A549 (cell line): ENCODE measurements at regions of chr16 and their contacts with region 1.

Region 1: DNA sequence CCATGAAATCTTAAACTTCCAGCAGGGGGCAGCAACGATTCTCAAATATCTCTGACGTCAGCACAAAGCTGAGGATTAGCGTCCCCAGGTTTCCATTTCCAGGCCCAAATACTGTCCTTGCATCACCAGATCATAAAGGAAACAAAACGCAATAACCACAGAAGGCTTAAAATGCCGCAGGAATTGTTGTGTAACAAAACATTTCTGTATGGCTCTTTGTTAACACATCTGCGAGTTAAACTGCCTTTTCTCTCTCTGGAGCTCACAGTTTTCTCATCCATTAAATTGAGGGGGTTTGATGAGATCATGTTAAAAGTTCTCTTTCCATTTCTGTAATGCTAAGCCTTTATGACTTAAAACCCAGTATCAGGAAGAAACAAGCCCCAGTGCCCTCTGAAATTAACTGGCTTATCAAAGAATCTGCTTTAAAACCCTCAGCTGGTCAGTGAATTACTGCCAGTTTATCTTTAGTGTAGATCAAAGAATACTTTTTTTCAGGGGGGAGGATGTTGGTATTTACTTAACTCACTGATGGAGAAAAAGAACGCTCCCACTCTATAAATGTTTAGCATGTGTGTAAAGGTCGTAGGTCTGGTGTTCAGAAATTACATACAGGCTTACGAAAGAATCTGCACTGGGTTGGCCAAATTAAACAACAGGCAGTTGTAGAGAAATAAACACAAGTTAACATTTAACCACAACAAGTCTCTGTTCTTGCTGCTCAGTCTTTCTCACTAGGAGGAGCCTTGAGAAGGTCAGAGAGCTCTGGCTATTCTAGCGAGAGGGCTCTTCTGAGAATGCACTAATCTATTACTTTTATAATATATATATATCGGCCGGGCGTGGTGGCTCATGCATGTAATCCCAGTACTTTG is 10.6 kb upstream of the TERF2 start:
- DNase-seq: peak; percentile 59 to 97
- ATAC-seq: peak; percentile 80 to 81
- H3K4me3 ChIP-seq: peak overlapping the region; percentile 30; the same call in 2 of the 3 replicates
- H3K27ac ChIP-seq: peak overlapping the region; percentile 90 to 95
- H3K4me1 ChIP-seq: peaks cover 61% of the 10 kb centered on the region
- CTCF ChIP-seq: peak; percentile 83
- EP300 ChIP-seq: peak; percentile 98
- POLR2A ChIP-seq: no peak
- RAD21 ChIP-seq: peak; percentile 81 to 83

Region 2: GRCh38 chr16:69410285-69410990 is 14.0 kb after region 1 on chr16:
- CTCF ChIA-PET with region 1: interaction called, 67 read pairs
- POLR2A ChIA-PET with region 1: interaction called, 3 read pairs
- DNase-seq: peak; percentile 33 to 80
- ATAC-seq: peak; percentile 44 to 48; a peak in 3 of 6 replicates
- H3K4me3 ChIP-seq: no peak overlapping the region
- H3K27ac ChIP-seq: peak overlapping the region; percentile 84 to 87
- H3K4me1 ChIP-seq: peaks cover 60% of the 10 kb centered on the region
- CTCF ChIP-seq: no peak
- EP300 ChIP-seq: peak; percentile 67 to 80; a peak in 3 of 5 replicates
- POLR2A ChIP-seq: no peak
- RAD21 ChIP-seq: no peak; a peak in 1 of 5 replicates

Region 3: DNA sequence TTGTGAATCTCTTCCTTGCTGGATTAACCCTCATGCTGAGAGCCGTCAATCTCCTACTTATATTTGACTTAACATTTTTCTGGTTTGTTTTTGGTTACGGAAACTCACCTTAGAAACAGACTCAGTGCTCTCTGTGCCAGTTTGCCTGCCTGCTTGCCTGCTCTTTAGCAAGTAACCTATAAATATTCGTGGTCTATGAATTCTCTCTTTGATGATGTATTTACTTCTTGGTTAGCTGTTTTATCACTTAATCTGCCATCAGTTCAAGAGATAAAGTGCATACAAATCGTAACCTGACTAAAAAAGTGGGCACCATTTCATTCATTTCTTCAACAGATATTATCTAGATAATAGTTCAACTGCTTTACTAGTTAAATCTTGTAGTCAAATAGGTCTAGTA is 54.7 kb after region 1 on chr16:
- CTCF ChIA-PET with region 1: interaction called, 10 read pairs
- POLR2A ChIA-PET with region 1: no interaction called
- DNase-seq: peak in 1 of 2 experiments; percentile 17
- ATAC-seq: no peak
- H3K4me3 ChIP-seq: no peak overlapping the region
- H3K27ac ChIP-seq: no peak overlapping the region
- H3K4me1 ChIP-seq: peaks cover 33% of the 10 kb centered on the region
- CTCF ChIP-seq: no peak
- EP300 ChIP-seq: no peak
- POLR2A ChIP-seq: no peak
- RAD21 ChIP-seq: no peak

Region 4: DNA sequence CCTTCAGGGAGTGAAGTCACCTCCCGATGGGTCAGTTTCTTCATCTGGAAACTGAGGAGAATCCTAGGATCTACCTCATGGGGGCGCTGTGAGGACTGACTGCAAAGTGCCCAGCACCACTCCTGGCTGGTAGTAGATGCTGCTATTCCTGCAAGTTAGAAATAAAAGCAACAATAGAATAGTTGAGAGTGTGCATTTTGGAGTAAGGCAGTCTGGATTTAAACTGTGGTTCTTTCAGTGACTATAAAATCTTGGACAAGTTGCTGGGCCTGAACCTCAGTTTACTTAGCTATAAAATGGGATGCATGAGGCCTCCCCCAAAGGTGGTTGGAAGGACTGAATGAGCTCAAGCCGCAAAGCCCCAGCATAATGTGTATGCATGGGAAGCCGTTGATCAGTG is 98.6 kb after region 1 on chr16:
- CTCF ChIA-PET with region 1: interaction called, 11 read pairs
- POLR2A ChIA-PET with region 1: no interaction called
- DNase-seq: peak in 1 of 2 experiments; percentile 45
- ATAC-seq: peak in 1 of 2 experiments; percentile 58; a peak in 3 of 6 replicates
- H3K4me3 ChIP-seq: no peak overlapping the region
- H3K27ac ChIP-seq: no peak overlapping the region
- H3K4me1 ChIP-seq: no peaks in the 10 kb centered on the region
- CTCF ChIP-seq: peak; percentile 28; the same call in 2 of the 3 replicates
- EP300 ChIP-seq: no peak
- POLR2A ChIP-seq: no peak
- RAD21 ChIP-seq: peak in 1 of 2 experiments; percentile 28; a peak in 3 of 5 replicates

Region 5: GRCh38 chr16:69565671-69566239 is 169.3 kb after region 1 on chr16 and contains the start of gene NFAT5:
- CTCF ChIA-PET with region 1: interaction called, 17 read pairs
- POLR2A ChIA-PET with region 1: interaction called, 8 read pairs
- DNase-seq: peak; percentile 72 to 87
- ATAC-seq: peak; percentile 77 to 82
- H3K4me3 ChIP-seq: peak within 1 kb of the TSS; percentile 79
- H3K27ac ChIP-seq: peak within 1 kb of the TSS; percentile 97 to 99
- H3K4me1 ChIP-seq: peaks cover 50% of the 10 kb centered on the region
- CTCF ChIP-seq: no peak
- EP300 ChIP-seq: no peak
- POLR2A ChIP-seq: peak; percentile 60
- RAD21 ChIP-seq: peak; percentile 8 to 58; a peak in 4 of 5 replicates
- polyA plus RNA-seq, gene NFAT5: 45.1 and 48.3 TPM in 2 replicates

Region 6: DNA sequence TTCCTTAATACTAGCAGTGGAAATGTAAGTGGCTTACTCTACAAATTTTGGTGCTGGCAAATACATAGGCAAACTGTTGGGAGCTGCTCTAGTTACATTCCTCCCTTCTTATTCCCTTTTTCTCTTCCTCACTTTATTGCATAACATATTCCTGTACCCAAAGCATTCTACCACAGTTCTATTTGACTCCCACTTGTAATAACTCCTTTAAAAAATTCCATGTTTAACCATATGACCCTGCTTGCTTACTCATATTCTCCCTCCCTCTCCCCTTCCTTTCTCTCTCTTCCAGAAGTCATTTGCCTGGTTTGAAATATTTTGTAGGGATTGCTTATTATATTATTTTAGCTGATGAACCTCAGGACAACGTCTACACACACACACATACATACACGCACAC is 307.2 kb after region 1 on chr16:
- CTCF ChIA-PET with region 1: interaction called, 36 read pairs
- POLR2A ChIA-PET with region 1: interaction called, 3 read pairs
- DNase-seq: no peak
- ATAC-seq: peak; percentile 9 to 11; a peak in 4 of 6 replicates
- H3K4me3 ChIP-seq: no peak overlapping the region
- H3K27ac ChIP-seq: no peak overlapping the region
- H3K4me1 ChIP-seq: peaks cover 41% of the 10 kb centered on the region
- CTCF ChIP-seq: no peak
- EP300 ChIP-seq: no peak
- POLR2A ChIP-seq: no peak
- RAD21 ChIP-seq: no peak

Region 7: DNA sequence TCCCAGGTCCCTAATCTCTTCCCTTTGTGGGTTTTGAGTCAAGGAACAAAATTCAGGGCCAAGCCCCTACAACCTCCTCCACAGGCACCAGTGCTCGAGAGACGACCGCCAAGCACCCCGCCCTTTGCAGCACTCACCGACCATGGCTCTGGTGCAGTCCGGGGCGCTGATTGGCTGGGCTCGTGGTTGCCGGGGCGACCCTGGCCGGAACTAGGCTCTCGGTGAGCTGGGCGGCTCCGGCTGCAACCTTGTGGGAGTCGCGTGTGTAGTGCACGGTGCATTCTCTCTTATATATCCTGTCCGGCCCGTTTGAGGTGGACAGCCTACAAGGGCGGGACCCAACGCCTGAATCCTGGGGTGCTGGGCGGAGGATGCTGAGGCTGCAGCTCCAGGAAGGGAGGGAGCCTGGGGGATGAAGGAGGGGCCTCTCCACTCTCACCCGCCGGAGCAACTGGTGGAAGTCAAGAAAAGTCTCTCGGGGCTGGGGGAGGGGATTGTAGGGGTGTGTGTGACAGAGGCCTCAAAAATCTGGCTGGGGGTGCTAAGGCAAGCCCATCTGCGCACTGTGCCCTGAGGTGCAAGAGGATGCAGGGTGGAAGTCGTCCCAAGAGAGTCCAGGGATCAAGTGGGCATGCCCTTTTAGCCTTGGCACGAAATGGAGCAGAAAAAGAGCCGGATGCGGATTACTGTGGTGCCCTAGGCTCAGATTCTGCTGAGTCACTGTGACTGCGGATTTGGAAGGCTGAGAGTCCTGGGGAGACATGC is 330.1 kb after region 1 on chr16 and contains the start of gene NQO1:
- CTCF ChIA-PET with region 1: interaction called, 16 read pairs
- POLR2A ChIA-PET with region 1: interaction called, 12 read pairs
- DNase-seq: peak; percentile 95 to 100
- ATAC-seq: peak; percentile 91 to 93
- H3K4me3 ChIP-seq: peak within 1 kb of the TSS; percentile 77
- H3K27ac ChIP-seq: peak within 1 kb of the TSS; percentile 95 to 99
- H3K4me1 ChIP-seq: peaks cover 31% of the 10 kb centered on the region
- CTCF ChIP-seq: no peak
- EP300 ChIP-seq: peak; percentile 62 to 86; a peak in 3 of 5 replicates
- POLR2A ChIP-seq: peak; percentile 99
- RAD21 ChIP-seq: peak in 1 of 2 experiments; percentile 12; a peak in 1 of 5 replicates
- polyA plus RNA-seq, gene NQO1: 1,834 and 2,226 TPM in 2 replicates